ENCODE measurements at regions of chr2 and their contacts with region 1.

Region 1: DNA sequence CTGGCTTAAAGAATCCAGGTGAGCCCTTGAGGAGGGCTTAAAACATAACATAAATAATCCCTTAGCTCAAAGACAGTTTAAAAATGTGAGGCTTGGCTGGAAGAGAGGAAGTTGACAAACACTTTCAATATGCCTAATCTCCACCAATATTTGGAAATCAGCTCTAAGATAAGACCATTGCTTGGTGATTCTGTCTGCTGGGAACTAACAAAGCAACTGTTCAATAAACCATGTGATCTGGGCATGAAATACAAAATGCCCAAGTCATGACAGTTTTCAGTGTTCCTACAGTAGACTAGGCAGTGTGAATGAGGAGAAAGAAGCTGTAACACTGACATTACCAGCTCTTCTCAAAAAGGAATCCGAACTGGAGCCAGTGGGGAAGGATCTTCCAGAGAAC is 10.7 kb downstream of the MFF start:
- DNase-seq: no peak
- H3K4me3 ChIP-seq: no peak overlapping the region
- H3K27ac ChIP-seq: no peak overlapping the region
- H3K4me1 ChIP-seq: no peaks in the 10 kb centered on the region
- H3K27me3 ChIP-seq: no peaks in the 10 kb centered on the region
- CTCF ChIP-seq: no peak
- POLR2A ChIP-seq: no peak

Region 2: GRCh38 chr2:227324995-227325838 is 10.5 kb before region 1 on chr2 and contains the start of gene MFF:
- CTCF ChIA-PET with region 1: interaction called, 10 read pairs
- POLR2A ChIA-PET with region 1: no interaction called
- dilution Hi-C with region 1: no loop called
- intact Hi-C with region 1: no loop called
- DNase-seq: peak; percentile 90
- H3K4me3 ChIP-seq: peak within 1 kb of the TSS; percentile 82 to 94 (median 85)
- H3K27ac ChIP-seq: peak within 1 kb of the TSS; percentile 59
- H3K4me1 ChIP-seq: peaks cover 12% of the 10 kb centered on the region
- H3K27me3 ChIP-seq: no peaks in the 10 kb centered on the region
- CTCF ChIP-seq: no peak
- POLR2A ChIP-seq: peak; percentile 82
- total RNA-seq, gene MFF: 60.4 and 65.1 TPM in 2 replicates

Region 3: GRCh38 chr2:227460070-227460485 is 124.4 kb after region 1 on chr2:
- CTCF ChIA-PET with region 1: no interaction called
- POLR2A ChIA-PET with region 1: no interaction called
- dilution Hi-C with region 1: no loop called
- intact Hi-C with region 1: no loop called
- DNase-seq: no peak
- H3K4me3 ChIP-seq: no peak overlapping the region
- H3K27ac ChIP-seq: no peak overlapping the region
- H3K4me1 ChIP-seq: no peaks in the 10 kb centered on the region
- H3K27me3 ChIP-seq: no peaks in the 10 kb centered on the region
- CTCF ChIP-seq: no peak
- POLR2A ChIP-seq: no peak

Measured in endothelial cell of umbilical vein (primary cell).